Endothelial cell of umbilical vein (primary cell): ENCODE measurements at regions of chr10 and their contacts with region 1.

Region 1: DNA sequence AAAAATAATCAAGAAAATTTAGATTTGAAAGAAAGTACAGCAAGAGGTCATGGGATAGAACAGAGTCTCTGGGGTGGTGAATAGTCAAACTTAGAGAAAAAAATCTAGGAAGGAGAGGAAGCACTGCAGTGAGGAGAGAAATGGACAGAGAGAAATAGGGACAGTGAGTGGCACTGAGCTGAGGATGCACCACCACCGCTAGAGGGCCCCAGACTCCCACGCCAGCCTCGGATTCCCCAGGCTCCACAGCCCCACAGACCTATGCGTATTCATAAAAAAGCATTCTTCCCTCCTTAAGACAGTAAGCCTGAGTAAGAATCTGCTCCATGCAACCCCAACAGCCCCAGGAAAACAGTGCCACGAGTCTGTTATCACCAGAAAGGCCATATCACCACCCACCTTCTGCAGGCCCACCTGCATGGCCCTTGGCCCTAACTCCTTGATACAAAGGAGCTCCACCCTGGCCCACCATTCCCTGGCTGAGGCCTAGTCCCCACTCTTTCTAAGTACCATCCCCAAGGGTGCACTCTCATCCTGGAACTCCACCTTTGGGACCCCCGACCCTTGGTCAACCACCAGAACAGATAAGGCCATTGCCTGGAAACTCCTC is 91.0 kb downstream of the ALOX5 start:
- DNase-seq: peak; percentile 67
- H3K4me3 ChIP-seq: no peak overlapping the region
- H3K27ac ChIP-seq: no peak overlapping the region
- H3K4me1 ChIP-seq: peaks cover 3% of the 10 kb centered on the region
- H3K27me3 ChIP-seq: no peaks in the 10 kb centered on the region
- CTCF ChIP-seq: peak; percentile 92 to 98
- POLR2A ChIP-seq: no peak

Region 2: DNA sequence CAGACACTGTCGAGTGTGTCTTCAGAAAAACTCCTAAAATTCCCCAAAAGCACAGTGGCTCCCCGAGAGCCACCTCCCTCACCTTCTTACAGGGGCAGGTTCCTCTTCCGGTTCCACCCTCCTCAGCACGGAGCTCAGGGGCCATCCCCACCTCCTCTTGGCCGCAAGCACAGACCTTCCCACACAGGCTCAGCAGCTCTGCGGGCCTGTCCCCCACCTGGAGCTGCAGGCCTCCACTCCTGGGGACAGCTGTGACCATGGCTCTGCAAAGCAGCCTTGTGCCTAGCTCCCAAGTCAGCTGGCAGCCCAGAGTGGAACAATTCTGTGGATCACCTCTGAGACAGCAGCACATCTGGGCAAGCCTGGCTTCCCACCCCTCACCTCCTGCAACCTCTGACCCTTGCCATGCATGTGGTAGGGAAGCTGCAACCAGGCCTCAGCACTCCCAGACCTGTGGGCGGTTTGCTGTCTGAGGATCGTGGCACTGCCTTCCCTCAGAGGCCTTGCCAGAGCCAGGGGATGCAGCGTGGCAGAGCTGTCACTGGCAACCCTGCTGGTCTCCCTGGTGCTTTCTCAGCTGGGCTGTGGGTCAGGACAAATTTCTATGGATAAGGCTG is 11.3 kb before region 1 on chr10:
- CTCF ChIA-PET with region 1: interaction called, 10 read pairs
- POLR2A ChIA-PET with region 1: no interaction called
- dilution Hi-C with region 1: no loop called
- intact Hi-C with region 1: no loop called
- DNase-seq: no peak
- H3K4me3 ChIP-seq: no peak overlapping the region
- H3K27ac ChIP-seq: no peak overlapping the region
- H3K4me1 ChIP-seq: no peaks in the 10 kb centered on the region
- H3K27me3 ChIP-seq: no peaks in the 10 kb centered on the region
- CTCF ChIP-seq: no peak
- POLR2A ChIP-seq: no peak

Region 3: GRCh38 chr10:45607276-45607675 is 142.2 kb after region 1 on chr10:
- CTCF ChIA-PET with region 1: no interaction called
- POLR2A ChIA-PET with region 1: no interaction called
- dilution Hi-C with region 1: no loop called
- intact Hi-C with region 1: no loop called
- DNase-seq: no peak
- H3K4me3 ChIP-seq: no peak overlapping the region
- H3K27ac ChIP-seq: no peak overlapping the region
- H3K4me1 ChIP-seq: no peaks in the 10 kb centered on the region
- H3K27me3 ChIP-seq: peaks cover 2 to 3% of the 10 kb centered on the region in 2 experiments
- CTCF ChIP-seq: no peak
- POLR2A ChIP-seq: no peak